Transverse colon (tissue), 4 donors: ENCODE measurements at regions of chr1 and their contacts with region 1.

Region 1: GRCh38 chr1:58392083-58392482 is 154.4 kb downstream of the OMA1 start:
- DNase-seq: no peak
- H3K4me3 ChIP-seq: no peak overlapping the region
- H3K27ac ChIP-seq: no peak overlapping the region
- H3K4me1 ChIP-seq: peaks cover 0 to 3% (median 0%) of the 10 kb centered on the region in 4 donors
- H3K27me3 ChIP-seq: no peaks in the 10 kb centered on the region
- CTCF ChIP-seq: no peak
- EP300 ChIP-seq: no peak
- POLR2A ChIP-seq: no peak

Region 2: GRCh38 chr1:58432851-58433668 is 41.0 kb after region 1 on chr1:
- in situ Hi-C with region 1: no loop called
- intact Hi-C with region 1: loop called (anchors 1 kb)
- DNase-seq: no peak
- H3K4me3 ChIP-seq: no peak overlapping the region
- H3K27ac ChIP-seq: no peak overlapping the region
- H3K4me1 ChIP-seq: no peaks in the 10 kb centered on the region
- H3K27me3 ChIP-seq: no peaks in the 10 kb centered on the region
- CTCF ChIP-seq: no peak
- EP300 ChIP-seq: no peak
- POLR2A ChIP-seq: no peak